Aorta (tissue), 5 donors: ENCODE measurements at regions of chr9 and their contacts with region 1.

Region 1: DNA sequence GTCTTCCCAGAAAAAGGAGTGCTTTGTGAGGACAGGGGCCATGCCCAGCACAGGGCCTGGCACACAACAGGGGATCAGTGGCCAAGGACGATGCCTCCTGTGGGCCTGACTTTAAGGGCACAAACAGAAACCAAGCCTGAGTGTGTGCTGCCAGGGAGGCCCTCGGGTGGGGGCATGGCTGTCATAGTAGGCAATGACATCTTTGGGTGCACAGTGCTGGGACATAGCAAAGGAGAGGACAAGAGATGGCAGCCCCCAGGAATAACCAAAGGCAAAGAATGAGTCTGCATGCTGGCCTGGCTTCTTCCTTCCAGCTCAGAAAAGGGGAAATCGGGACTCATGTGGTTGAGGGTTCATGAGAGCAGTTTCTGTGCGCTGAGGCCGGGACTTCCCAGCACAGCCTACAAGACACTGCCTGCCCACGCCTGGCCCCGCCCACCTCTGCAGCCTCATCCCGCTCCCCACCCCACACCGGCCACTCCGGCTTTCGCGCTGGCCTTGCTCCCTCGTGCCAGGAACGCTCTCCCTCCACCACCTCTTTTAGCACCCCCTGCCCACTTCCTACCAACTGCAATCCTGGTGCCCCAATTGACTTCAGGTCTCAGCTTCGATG is 13.8 kb upstream of the LHX2 start:
- DNase-seq: peak; percentile 75 to 87
- ATAC-seq: peak; percentile 37
- H3K4me3 ChIP-seq: no peak overlapping the region
- H3K27ac ChIP-seq: no peak overlapping the region
- H3K4me1 ChIP-seq: no peaks in the 10 kb centered on the region
- H3K27me3 ChIP-seq: peaks cover 0 to under 1% of the 10 kb centered on the region in 2 donors

Region 2: DNA sequence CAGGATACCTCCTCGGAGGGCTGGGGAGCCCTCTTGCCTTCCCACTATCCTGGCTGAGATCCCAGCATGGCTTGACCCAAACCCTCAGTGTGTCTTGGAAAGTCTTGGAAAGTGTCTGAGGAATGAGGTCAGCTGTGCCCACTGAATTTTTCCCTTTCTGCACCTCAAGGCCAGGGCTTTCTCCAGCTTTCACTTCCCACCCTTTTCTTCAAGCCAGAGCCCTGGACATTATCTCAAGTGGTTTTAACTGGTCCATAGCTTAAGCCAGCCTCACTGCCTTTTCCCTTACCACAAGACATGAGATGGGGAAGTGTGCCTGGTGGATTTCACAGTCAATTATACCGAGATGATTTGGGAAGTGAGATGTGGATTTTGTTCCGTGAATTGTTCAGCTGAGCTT is 21.9 kb before region 1 on chr9:
- intact Hi-C with region 1: loop called in 1 of 2 experiments (anchors 2 kb)
- DNase-seq: no peak
- ATAC-seq: no peak
- H3K4me3 ChIP-seq: no peak overlapping the region
- H3K27ac ChIP-seq: no peak overlapping the region
- H3K4me1 ChIP-seq: no peaks in the 10 kb centered on the region
- H3K27me3 ChIP-seq: no peaks in the 10 kb centered on the region

Region 3: GRCh38 chr9:124238546-124239140 is 240.9 kb after region 1 on chr9:
- intact Hi-C with region 1: no loop called
- DNase-seq: peak; percentile 4 to 17
- ATAC-seq: no peak
- H3K4me3 ChIP-seq: no peak overlapping the region
- H3K27ac ChIP-seq: no peak overlapping the region
- H3K4me1 ChIP-seq: no peaks in the 10 kb centered on the region
- H3K27me3 ChIP-seq: no peaks in the 10 kb centered on the region